ENCODE measurements at regions of chr5 and their contacts with region 1.

Region 1: DNA sequence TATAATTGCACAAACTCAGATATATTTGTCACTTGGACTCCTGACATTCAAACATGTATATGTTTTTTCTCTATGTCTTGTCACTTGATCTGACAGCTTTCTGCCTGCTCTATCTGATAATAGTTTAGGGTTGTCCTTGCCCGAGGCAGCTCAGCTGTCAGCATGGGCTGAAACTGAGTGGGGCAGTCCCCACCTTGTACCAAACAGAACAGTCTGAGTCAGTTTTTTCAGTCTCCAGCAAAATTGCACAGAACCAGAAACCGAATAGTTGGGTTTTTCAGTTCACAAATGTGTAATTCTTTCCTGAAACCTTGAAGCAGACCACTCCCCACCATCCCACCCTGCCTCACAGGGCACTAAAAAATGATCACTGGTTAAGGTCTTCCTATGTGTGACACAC is 9.5 kb upstream of the HAND1 start:
- DNase-seq: peak; percentile 79
- ATAC-seq: peak; percentile 99
- H3K4me3 Mint-ChIP-seq: no peak overlapping the region
- H3K27ac Mint-ChIP-seq: no peak overlapping the region
- H3K4me1 Mint-ChIP-seq: peaks cover 28% of the 10 kb centered on the region
- H3K27me3 Mint-ChIP-seq: peaks cover 75% of the 10 kb centered on the region

Region 2: GRCh38 chr5:154214371-154215106 is 273.0 kb before region 1 on chr5:
- CTCF ChIA-PET with region 1: no interaction called
- POLR2A ChIA-PET with region 1: no interaction called
- intact Hi-C with region 1: loop called in 1 of 2 experiments (anchors 1 kb)
- DNase-seq: no peak
- ATAC-seq: peak; percentile 93
- H3K4me3 Mint-ChIP-seq: peak overlapping the region; percentile 34
- H3K27ac Mint-ChIP-seq: peak overlapping the region; percentile 87
- H3K4me1 Mint-ChIP-seq: peaks cover 51% of the 10 kb centered on the region
- H3K27me3 Mint-ChIP-seq: no peaks in the 10 kb centered on the region

Region 3: GRCh38 chr5:154467655-154468354 is 19.7 kb before region 1 on chr5:
- CTCF ChIA-PET with region 1: interaction called, 5 read pairs
- POLR2A ChIA-PET with region 1: no interaction called
- intact Hi-C with region 1: loop called (anchors 2 kb)
- DNase-seq: peak; percentile 90
- ATAC-seq: peak; percentile 98
- H3K4me3 Mint-ChIP-seq: no peak overlapping the region
- H3K27ac Mint-ChIP-seq: no peak overlapping the region
- H3K4me1 Mint-ChIP-seq: peaks cover 7% of the 10 kb centered on the region
- H3K27me3 Mint-ChIP-seq: peaks cover 31% of the 10 kb centered on the region

Region 4: GRCh38 chr5:154475591-154476353 is 11.8 kb before region 1 on chr5:
- CTCF ChIA-PET with region 1: interaction called, 3 read pairs
- POLR2A ChIA-PET with region 1: interaction called, 4 read pairs
- intact Hi-C with region 1: loop called (anchors 1 kb)
- DNase-seq: no peak
- ATAC-seq: no peak
- H3K4me3 Mint-ChIP-seq: no peak overlapping the region
- H3K27ac Mint-ChIP-seq: no peak overlapping the region
- H3K4me1 Mint-ChIP-seq: peaks cover 55% of the 10 kb centered on the region
- H3K27me3 Mint-ChIP-seq: peaks cover 76% of the 10 kb centered on the region

Region 5: GRCh38 chr5:154513669-154514084 is 26.1 kb after region 1 on chr5:
- CTCF ChIA-PET with region 1: no interaction called
- POLR2A ChIA-PET with region 1: no interaction called
- intact Hi-C with region 1: loop called (anchors 1 kb)
- DNase-seq: peak; percentile 43
- ATAC-seq: peak; percentile 53
- H3K4me3 Mint-ChIP-seq: no peak overlapping the region
- H3K27ac Mint-ChIP-seq: no peak overlapping the region
- H3K4me1 Mint-ChIP-seq: peaks cover 19% of the 10 kb centered on the region
- H3K27me3 Mint-ChIP-seq: peaks cover 35% of the 10 kb centered on the region

Measured in activated CD4-positive, alpha-beta T cell treated with anti-CD3 and anti-CD28 coated beads for 36 hours (primary cell).